ENCODE measurements at regions of chr5 and their contacts with region 1.

Region 1: DNA sequence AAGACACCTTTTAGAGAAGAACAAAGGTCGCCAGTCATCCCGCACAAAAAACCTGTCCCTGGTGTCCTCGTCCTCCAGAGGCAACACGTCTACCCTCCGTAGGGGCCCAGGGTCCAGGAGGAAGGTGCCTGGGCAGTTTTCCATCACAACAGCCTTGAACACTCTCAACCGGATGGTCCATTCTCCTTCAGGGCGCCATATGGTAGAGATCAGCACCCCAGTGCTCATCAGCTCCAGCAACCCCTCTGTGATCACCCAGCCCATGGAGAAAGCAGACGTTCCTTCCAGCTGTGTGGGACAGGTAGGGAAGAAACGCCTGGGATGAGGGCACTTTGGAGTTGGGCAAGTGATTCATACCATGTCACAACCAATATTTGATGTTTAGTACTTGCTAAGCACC is 77.4 kb downstream of the SH3RF2 start:
- DNase-seq: no peak
- ATAC-seq: no peak
- H3K4me3 ChIP-seq: no peak overlapping the region
- H3K4me3 Mint-ChIP-seq: no peak overlapping the region
- H3K27ac ChIP-seq: no peak overlapping the region
- H3K27ac Mint-ChIP-seq: no peak overlapping the region
- H3K4me1 ChIP-seq: no peaks in the 10 kb centered on the region
- H3K4me1 Mint-ChIP-seq: no peaks in the 10 kb centered on the region
- H3K27me3 ChIP-seq: no peaks in the 10 kb centered on the region
- H3K27me3 Mint-ChIP-seq: peaks cover 8% of the 10 kb centered on the region
- CTCF ChIP-seq: no peak

Region 2: DNA sequence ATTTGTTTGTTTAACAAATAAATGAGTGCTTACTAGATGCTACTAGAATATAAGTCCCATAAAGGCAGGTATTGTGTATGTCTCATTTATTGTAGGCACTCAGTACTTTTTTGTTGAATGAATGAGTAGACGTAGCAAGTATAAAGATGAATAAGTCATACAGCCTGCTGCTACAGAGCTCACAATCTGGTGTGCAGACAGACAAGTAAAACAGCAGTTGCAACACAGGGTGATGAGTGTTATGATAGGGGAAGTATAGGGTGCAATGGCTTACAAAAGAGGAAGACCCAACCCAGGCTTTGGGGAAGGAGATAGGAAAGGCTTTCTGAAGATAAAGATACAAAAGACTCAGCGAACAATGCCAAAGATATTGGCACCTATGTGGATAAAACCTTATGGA is 29.7 kb before region 1 on chr5:
- CTCF ChIA-PET with region 1: no interaction called
- POLR2A ChIA-PET with region 1: no interaction called
- intact Hi-C with region 1: loop called in 1 of 2 experiments (anchors 1 kb)
- DNase-seq: peak in 1 of 9 experiments; percentile 8
- ATAC-seq: no peak
- H3K4me3 ChIP-seq: no peak overlapping the region
- H3K4me3 Mint-ChIP-seq: no peak overlapping the region
- H3K27ac ChIP-seq: no peak overlapping the region
- H3K27ac Mint-ChIP-seq: no peak overlapping the region
- H3K4me1 ChIP-seq: no peaks in the 10 kb centered on the region
- H3K4me1 Mint-ChIP-seq: no peaks in the 10 kb centered on the region
- H3K27me3 ChIP-seq: no peaks in the 10 kb centered on the region
- H3K27me3 Mint-ChIP-seq: peaks cover 6% of the 10 kb centered on the region
- CTCF ChIP-seq: no peak